ENCODE measurements at regions of chr2 and their contacts with region 1.

Region 1: GRCh38 chr2:30366199-30366691 is 80.8 kb upstream of the LCLAT1 start:
- DNase-seq: peak; percentile 76
- ATAC-seq: peak; percentile 91
- H3K4me3 Mint-ChIP-seq: no peak overlapping the region
- H3K27ac Mint-ChIP-seq: peak overlapping the region; percentile 78
- H3K4me1 Mint-ChIP-seq: peaks cover 44% of the 10 kb centered on the region
- H3K27me3 Mint-ChIP-seq: no peaks in the 10 kb centered on the region
- CTCF ChIP-seq: no peak

Region 2: DNA sequence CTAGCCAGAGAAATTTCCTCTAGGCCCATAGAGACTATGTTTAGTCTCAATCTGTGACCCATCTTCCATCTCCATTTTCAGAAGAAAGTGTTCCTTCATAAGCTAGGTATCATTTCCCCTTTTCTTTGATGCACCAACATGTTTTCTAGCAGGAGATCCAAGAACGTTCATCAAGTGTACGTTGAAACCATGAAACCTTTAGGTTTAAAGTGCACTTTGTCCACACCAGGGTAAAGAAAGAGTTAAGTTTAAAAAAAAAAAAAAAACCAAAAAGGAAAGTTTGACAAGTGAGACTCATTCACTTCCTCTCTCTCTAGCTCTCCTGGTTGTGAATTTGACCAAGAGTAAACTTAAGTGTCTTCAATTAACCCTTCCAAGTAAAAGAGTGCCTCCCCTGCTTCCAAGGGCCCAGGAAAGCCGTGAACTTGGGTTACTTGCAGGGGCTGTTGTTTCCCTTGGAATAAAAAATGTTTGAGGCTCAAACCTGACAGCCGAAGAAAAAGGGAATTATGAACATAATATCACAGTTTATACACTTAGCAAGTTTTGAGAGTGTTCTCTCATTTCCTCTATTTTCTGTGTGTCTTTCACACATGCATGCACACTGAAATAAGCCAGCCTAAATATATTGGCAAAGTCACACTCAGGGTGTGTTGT is 78.3 kb before region 1 on chr2:
- CTCF ChIA-PET with region 1: no interaction called
- POLR2A ChIA-PET with region 1: no interaction called
- intact Hi-C with region 1: no loop called
- DNase-seq: no peak
- ATAC-seq: peak; percentile 63
- H3K4me3 Mint-ChIP-seq: peak overlapping the region; percentile 1
- H3K27ac Mint-ChIP-seq: peak overlapping the region; percentile 75
- H3K4me1 Mint-ChIP-seq: peaks cover 39% of the 10 kb centered on the region
- H3K27me3 Mint-ChIP-seq: no peaks in the 10 kb centered on the region
- CTCF ChIP-seq: no peak

Region 3: GRCh38 chr2:30410217-30410616 is 44.0 kb after region 1 on chr2:
- CTCF ChIA-PET with region 1: no interaction called
- POLR2A ChIA-PET with region 1: interaction called, 3 read pairs
- intact Hi-C with region 1: loop called (anchors 5 kb)
- DNase-seq: peak; percentile 30
- ATAC-seq: peak; percentile 84
- H3K4me3 Mint-ChIP-seq: no peak overlapping the region
- H3K27ac Mint-ChIP-seq: peak overlapping the region; percentile 59
- H3K4me1 Mint-ChIP-seq: peaks cover 31% of the 10 kb centered on the region
- H3K27me3 Mint-ChIP-seq: no peaks in the 10 kb centered on the region
- CTCF ChIP-seq: no peak